Activated CD4-positive, alpha-beta T cell treated with anti-CD3 and anti-CD28 coated beads for 36 hours (primary cell): ENCODE measurements at regions of chr13 and their contacts with region 1.

Region 1: DNA sequence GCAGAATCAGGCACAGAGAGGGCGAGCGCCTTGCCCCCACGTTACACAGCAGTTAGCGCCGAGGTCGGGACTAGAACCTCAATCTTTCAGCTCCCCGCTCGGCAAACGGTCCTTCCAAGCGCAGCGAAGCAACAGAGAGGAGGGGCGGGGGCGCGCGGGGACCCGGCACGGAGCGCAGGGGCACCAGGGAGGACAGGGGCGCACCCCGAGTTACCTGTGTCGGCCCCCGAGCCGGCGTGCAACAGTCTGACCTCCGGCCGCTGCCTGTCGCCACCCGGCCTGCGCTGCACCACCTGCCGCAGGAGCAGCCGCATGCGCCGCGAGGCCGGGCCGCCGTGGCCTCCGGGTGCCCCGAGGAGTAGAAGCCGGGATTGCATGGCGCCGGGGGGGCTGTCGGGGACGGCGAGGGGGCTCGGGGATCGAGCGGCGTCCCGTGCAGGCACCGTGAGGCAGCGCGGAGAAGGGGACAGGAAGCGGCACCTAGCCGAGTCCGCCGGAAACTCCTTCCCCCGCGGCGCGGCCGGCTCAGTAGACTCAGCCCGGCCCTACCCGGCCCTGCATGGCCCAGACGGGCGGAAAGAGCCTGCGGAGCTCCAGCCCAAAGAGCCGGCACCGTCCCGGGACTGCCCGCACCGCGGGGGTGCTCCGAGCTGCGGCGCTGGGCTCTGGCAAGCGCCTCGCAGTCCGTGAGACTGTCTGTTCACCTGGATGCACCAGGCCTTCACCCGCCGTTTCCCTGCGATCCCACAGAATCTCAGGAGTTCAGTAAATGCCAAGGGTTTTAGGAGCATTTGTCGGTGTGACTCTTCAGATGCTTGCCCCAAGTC is at the start of gene VWA8:
- DNase-seq: peak; percentile 93
- ATAC-seq: peak; percentile 81
- H3K4me3 Mint-ChIP-seq: peak within 1 kb of the TSS; percentile 92
- H3K27ac Mint-ChIP-seq: peak within 1 kb of the TSS; percentile 99
- H3K4me1 Mint-ChIP-seq: peaks cover 60% of the 10 kb centered on the region
- H3K27me3 Mint-ChIP-seq: peaks cover 2% of the 10 kb centered on the region
- total RNA-seq, gene VWA8: 21.7 to 26.2 TPM

Region 2: GRCh38 chr13:41384755-41385503 is 575.9 kb before region 1 on chr13:
- CTCF ChIA-PET with region 1: no interaction called
- POLR2A ChIA-PET with region 1: no interaction called
- intact Hi-C with region 1: no loop called
- DNase-seq: peak; percentile 9
- ATAC-seq: no peak
- H3K4me3 Mint-ChIP-seq: no peak overlapping the region
- H3K27ac Mint-ChIP-seq: no peak overlapping the region
- H3K4me1 Mint-ChIP-seq: peaks cover 26% of the 10 kb centered on the region
- H3K27me3 Mint-ChIP-seq: no peaks in the 10 kb centered on the region

Region 3: DNA sequence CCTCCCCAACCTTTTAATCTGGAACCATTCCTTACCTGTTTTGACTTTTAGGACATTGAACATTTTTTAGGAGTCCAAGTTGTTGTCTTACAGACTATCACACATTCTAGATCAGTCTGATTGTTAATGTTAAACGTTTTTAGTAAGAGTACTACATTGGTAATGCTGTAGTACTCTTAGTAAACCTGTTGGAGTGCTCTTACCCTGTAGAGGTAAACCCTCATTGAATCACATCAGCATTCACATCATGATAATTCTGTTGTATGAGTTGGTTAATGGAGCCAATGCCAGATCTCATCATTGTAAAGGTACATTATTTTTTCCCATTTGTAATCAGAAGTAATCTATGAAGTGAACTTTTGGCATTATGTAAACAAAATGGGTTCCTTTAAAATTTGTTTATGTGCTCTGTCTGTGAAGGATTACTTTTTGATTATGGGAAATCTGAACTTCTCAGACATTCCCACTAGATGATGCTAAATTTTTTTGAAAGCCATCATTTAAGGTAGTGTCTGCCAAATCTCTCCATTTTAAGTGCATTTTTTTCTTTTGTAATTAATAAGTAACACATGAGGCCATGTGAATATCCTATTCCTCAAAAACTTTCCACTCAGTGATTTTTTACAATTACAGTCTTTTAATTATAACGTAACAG is 55.1 kb before region 1 on chr13:
- CTCF ChIA-PET with region 1: interaction called, 4 read pairs
- POLR2A ChIA-PET with region 1: no interaction called
- intact Hi-C with region 1: loop called (anchors 1 to 2 kb)
- DNase-seq: no peak
- ATAC-seq: peak; percentile 78
- H3K4me3 Mint-ChIP-seq: no peak overlapping the region
- H3K27ac Mint-ChIP-seq: peak overlapping the region; percentile 3
- H3K4me1 Mint-ChIP-seq: peaks cover 35% of the 10 kb centered on the region
- H3K27me3 Mint-ChIP-seq: no peaks in the 10 kb centered on the region

Region 4: DNA sequence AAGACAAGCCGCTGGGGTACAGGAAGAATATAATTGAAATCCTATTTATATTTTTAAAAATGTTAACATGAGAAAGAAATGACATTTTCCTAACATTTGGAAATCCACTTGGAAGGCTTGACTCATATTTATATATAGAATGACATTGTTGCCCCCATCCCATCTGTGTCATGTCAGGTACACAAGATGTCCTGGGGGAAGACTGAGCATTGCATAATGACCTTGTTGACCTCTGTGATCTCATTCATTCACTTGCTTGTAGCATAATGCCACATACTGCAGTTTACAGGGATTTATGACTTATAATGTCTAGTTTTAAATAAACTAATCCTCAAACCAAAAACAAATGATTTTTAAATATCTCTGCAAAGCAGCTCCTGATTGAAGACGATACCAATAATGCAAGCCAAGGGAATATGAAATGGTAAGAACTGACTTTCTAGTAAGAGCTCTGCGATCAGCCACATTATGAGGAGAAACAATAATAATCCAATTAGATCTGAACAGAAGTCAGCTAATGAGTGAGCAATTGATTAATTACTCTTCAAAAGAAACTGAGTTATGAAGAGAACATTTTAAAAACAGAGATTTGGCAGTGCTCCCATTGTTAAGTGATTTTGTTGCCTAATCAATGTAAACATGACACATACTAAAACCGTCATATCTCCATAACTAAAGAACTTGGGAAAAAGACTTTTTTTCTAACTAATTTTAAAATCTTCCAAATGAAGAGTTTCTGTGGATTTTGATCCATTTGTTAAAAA is 21.3 kb after region 1 on chr13:
- CTCF ChIA-PET with region 1: interaction called, 15 read pairs
- POLR2A ChIA-PET with region 1: no interaction called
- intact Hi-C with region 1: no loop called
- DNase-seq: no peak
- ATAC-seq: no peak
- H3K4me3 Mint-ChIP-seq: no peak overlapping the region
- H3K27ac Mint-ChIP-seq: no peak overlapping the region
- H3K4me1 Mint-ChIP-seq: peaks cover 16% of the 10 kb centered on the region
- H3K27me3 Mint-ChIP-seq: peaks cover 7% of the 10 kb centered on the region

Region 5: DNA sequence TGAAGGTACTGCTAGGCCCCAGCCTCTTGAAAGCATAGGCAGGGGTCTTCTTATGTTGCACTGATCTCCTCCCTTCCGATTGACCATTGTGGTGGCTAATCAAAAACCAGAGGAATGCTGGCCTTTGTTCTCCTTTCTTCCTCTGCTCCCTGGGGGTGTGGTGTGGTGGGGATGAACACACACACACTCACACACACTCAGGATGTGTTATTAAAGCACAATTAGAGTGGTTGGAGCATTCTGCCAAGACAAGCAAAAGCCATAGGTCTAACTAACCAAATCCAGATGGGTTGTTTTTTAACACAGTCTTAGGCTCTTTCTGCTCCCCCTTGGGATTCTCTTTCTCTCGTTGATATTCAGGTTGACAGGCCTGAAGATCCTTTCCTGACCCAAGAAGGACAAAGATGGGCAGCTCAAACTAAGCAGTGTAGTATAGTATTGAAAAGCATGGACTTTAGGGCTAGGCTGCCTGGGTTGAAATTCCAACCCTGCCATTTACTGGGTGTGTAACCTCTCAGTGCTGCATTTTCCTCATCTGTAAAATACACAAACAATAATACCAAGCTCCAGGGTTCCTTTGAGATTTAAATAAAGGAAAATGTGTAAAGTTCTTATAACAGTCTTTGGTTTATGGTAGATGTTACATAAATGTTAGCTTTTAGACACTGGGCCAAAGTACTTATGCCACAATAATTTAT is 62.1 kb after region 1 on chr13:
- CTCF ChIA-PET with region 1: no interaction called
- POLR2A ChIA-PET with region 1: no interaction called
- intact Hi-C with region 1: no loop called
- DNase-seq: no peak
- ATAC-seq: no peak
- H3K4me3 Mint-ChIP-seq: no peak overlapping the region
- H3K27ac Mint-ChIP-seq: no peak overlapping the region
- H3K4me1 Mint-ChIP-seq: no peaks in the 10 kb centered on the region
- H3K27me3 Mint-ChIP-seq: peaks cover 1% of the 10 kb centered on the region

Region 6: GRCh38 chr13:42048682-42049453 is 88.0 kb after region 1 on chr13:
- CTCF ChIA-PET with region 1: interaction called, 3 read pairs
- POLR2A ChIA-PET with region 1: interaction called, 4 read pairs
- intact Hi-C with region 1: loop called (anchors 2 kb)
- DNase-seq: peak; percentile 82
- ATAC-seq: peak; percentile 68
- H3K4me3 Mint-ChIP-seq: peak overlapping the region; percentile 86
- H3K27ac Mint-ChIP-seq: no peak overlapping the region
- H3K4me1 Mint-ChIP-seq: peaks cover 24% of the 10 kb centered on the region
- H3K27me3 Mint-ChIP-seq: no peaks in the 10 kb centered on the region

Region 7: GRCh38 chr13:42279080-42279479 is 318.2 kb after region 1 on chr13:
- CTCF ChIA-PET with region 1: no interaction called
- POLR2A ChIA-PET with region 1: interaction called, 3 read pairs
- intact Hi-C with region 1: loop called in 1 of 2 experiments (anchors 2 kb)
- DNase-seq: peak; percentile 58
- ATAC-seq: no peak
- H3K4me3 Mint-ChIP-seq: no peak overlapping the region
- H3K27ac Mint-ChIP-seq: no peak overlapping the region
- H3K4me1 Mint-ChIP-seq: peaks cover 47% of the 10 kb centered on the region
- H3K27me3 Mint-ChIP-seq: no peaks in the 10 kb centered on the region